Right ventricle myocardium superior (tissue), 1 donor: ENCODE measurements at regions of chr10 and their contacts with region 1.

Region 1: GRCh38 chr10:114470956-114471905 is 66.9 kb upstream of the AFAP1L2 start:
- DNase-seq: peak; percentile 73
- ATAC-seq: peak; percentile 79

Region 2: DNA sequence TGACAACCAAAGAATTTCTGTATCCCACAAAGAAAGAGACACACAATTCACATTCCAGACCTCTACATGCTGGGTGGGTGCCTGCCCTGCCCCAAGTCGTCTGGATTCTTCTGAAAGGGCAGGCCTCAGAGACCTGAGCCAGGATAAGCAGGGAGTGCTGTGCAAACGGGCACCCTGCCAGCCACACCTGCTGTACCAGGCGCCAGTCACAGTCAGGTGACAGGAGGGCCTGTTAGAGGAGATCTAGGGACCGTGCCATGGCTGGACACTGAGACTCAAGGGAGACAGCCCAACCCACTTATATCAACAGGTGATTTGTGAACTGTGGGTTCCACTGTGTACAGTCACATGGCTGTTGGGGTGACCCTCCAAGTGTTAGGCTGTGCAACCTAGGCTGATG is 36.2 kb after region 1 on chr10:
- intact Hi-C with region 1: no loop called
- DNase-seq: peak; percentile 74
- ATAC-seq: peak; percentile 73

Region 3: GRCh38 chr10:114541081-114541796 is 70.0 kb after region 1 on chr10:
- intact Hi-C with region 1: loop called (anchors 5 kb)
- DNase-seq: peak; percentile 71
- ATAC-seq: peak; percentile 85

Region 4: GRCh38 chr10:114779803-114780609 is 308.8 kb after region 1 on chr10:
- intact Hi-C with region 1: loop called (anchors 10 kb)
- DNase-seq: no peak
- ATAC-seq: no peak

Region 5: DNA sequence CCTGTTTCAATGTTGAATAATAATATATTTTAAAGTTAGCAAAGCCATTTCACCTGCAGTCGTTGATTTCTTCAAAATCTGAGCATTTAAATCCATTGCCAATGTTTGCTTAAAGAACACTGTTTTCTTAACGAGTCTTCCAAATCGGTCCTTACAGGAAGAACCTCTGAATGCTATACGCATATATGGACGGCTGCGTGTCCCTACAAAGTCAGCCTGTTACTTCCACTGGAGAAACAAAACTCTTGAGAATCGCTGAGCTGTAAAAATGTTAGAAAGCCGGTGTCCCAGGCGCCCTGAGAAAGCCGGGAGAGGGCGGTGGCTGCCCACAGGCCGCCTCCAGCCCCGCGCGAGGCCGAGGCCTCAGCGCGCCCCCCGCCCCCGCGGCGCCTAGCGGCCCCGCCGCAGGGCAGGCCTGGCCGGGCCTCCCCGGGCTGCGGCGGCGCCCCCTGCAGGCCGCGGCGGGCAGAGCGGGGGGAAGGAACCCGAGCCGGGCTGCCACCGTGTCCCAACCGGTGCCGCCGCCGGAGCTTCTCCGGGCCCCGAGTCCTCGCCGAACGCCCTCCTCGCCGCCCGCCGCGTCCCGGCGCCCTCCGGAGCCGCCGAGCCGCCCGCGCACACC is 350.2 kb after region 1 on chr10 and contains the start of gene FHIP2A:
- intact Hi-C with region 1: loop called (anchors 10 kb)
- DNase-seq: peak; percentile 89
- ATAC-seq: peak; percentile 92
- total RNA-seq, gene FHIP2A: 22.6 TPM